PC-9 (cell line): ENCODE measurements at regions of chr9 and their contacts with region 1.

Region 1: DNA sequence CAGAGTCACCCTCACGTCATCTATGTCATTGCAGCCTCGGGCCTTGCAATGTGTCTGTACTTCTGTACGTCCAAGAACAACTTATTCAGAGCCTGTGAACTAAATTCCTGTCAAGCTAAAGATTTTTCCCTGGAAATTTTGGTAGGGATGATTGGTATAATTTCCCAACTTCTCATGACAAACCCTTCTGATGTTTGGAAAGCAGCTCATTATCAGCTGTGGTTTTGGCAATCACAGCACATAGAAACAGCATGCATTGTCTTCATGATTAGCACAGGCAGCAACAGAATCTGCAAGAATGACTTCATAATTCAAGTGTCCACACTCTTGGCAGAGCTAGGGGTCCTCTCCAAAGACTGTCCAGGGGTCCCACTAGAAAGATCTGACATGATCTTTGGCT is 49.5 kb downstream of the APBA1 start:
- DNase-seq: no peak
- H3K4me3 ChIP-seq: no peak overlapping the region
- H3K27ac ChIP-seq: no peak overlapping the region
- H3K4me1 ChIP-seq: no peaks in the 10 kb centered on the region
- H3K27me3 ChIP-seq: no peaks in the 10 kb centered on the region
- CTCF ChIP-seq: no peak

Region 2: DNA sequence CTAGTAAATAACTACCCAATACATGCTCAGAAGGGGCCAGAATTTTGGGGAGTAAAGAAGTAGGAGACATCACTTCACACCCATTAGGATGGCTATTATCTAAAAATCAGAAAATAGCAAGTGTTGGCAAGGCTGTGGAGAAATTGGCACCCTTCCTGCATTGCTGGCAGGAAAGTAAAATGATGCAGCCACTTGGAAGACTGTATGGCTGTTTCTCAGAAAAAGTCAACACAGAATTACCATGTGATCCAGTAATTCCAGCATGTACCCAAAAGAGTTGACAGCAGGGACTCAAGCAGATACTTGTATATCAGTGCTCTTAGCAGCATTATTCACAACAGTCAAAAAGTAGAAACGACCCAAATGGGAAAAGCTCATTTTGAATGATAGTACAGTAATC is 58.1 kb before region 1 on chr9:
- CTCF ChIA-PET with region 1: no interaction called
- POLR2A ChIA-PET with region 1: no interaction called
- intact Hi-C with region 1: loop called (anchors 10 kb)
- DNase-seq: no peak
- H3K4me3 ChIP-seq: no peak overlapping the region
- H3K27ac ChIP-seq: no peak overlapping the region
- H3K4me1 ChIP-seq: no peaks in the 10 kb centered on the region
- H3K27me3 ChIP-seq: no peaks in the 10 kb centered on the region
- CTCF ChIP-seq: no peak

Region 3: DNA sequence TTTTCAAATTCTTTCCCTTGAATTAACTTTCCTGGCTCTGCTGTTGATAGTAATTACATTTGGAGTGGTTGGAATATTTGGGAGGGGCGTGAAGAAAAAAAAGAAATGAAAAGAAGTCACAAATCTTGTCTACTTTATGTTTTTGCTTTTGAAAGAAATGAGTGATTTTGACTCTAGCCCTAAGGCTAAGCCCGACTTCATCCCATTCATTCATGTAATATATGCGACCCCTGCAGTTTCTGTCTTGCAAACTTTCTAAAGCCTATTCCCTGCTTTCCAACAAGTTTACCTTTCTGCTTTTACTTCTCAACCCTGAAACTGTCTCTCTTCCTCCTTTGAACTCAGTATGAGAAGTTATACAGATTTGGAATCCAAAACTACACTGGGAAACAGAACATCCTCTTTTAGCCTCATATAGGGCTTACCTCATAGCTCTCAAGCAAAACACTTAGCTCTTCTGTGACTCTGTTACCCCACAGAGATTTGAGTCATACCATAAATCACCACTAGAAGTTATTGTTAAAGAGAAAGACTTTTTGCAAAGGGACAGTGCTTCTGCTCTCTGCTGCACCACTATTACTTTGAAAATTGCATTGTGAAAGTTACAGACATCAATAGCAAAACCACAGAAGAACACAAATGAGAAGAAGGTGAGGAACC is 199.5 kb after region 1 on chr9:
- CTCF ChIA-PET with region 1: interaction called, 23 read pairs
- POLR2A ChIA-PET with region 1: no interaction called
- intact Hi-C with region 1: no loop called
- DNase-seq: no peak
- H3K4me3 ChIP-seq: no peak overlapping the region
- H3K27ac ChIP-seq: no peak overlapping the region
- H3K4me1 ChIP-seq: no peaks in the 10 kb centered on the region
- H3K27me3 ChIP-seq: no peaks in the 10 kb centered on the region
- CTCF ChIP-seq: no peak